Aorta (tissue), 5 donors: ENCODE measurements at regions of chr19 and their contacts with region 1.

Region 1: GRCh38 chr19:16247353-16248182 is 49.9 kb downstream of the AP1M1 start:
- DNase-seq: peak; percentile 89 to 97
- ATAC-seq: peak; percentile 94
- H3K4me3 ChIP-seq: no peak overlapping the region
- H3K27ac ChIP-seq: no peak overlapping the region
- H3K4me1 ChIP-seq: no peaks in the 10 kb centered on the region
- H3K27me3 ChIP-seq: no peaks in the 10 kb centered on the region

Region 2: DNA sequence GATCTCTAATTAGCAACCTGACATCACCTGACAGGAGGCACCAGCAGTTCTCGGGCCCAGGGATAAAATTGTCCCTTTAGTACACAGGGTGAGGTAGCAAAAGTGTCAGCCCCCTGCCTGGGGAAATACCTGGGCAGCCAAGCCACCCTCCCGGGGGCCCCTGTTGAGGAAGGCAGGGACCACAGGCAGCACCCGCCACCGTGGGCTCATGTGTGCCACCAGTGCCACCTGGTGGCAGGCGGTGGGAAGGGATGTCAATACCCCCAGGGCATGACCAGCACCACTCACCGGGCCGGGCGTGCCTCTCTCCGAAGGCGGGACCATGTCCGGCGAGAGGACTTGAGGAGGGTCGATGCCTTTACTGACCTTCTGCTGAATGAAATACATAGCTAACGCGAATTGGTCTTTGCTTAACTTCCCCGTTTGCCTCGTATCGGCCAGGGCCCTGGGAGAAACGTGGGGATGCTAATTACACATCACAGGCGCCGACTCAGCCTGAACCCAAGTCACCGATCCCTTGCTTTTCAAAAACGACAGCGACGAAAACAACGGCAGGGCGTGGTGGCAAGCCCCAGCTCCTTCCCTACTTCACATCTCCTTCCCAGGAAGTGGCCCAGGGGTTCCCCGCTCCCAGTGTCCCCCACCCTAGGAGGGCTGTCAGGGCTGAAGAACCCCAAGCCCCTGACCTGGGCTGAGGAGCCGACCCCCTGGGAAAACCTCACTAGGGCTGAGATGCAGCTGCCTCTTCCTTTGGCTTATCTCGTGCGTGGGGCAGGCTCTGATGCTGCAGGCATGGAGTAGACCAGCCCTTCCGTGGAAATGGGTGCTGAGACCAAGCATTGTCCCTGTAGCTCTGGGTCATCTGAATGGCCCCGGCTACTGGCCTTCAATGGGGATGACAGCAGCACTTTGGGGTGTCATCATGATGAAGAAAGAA is 170.4 kb after region 1 on chr19:
- intact Hi-C with region 1: loop called in 1 of 2 experiments (anchors 10 kb)
- DNase-seq: peak; percentile 76 to 93
- ATAC-seq: peak; percentile 83
- H3K4me3 ChIP-seq: no peak overlapping the region
- H3K27ac ChIP-seq: no peak overlapping the region
- H3K4me1 ChIP-seq: no peaks in the 10 kb centered on the region
- H3K27me3 ChIP-seq: no peaks in the 10 kb centered on the region